Astrocyte of the cerebellum (primary cell): ENCODE measurements at regions of chr7 and their contacts with region 1.

Region 1: GRCh38 chr7:99210264-99210970 is 2.5 kb upstream of the KPNA7 start:
- DNase-seq: no peak
- H3K4me3 ChIP-seq: no peak overlapping the region
- CTCF ChIP-seq: no peak

Region 2: DNA sequence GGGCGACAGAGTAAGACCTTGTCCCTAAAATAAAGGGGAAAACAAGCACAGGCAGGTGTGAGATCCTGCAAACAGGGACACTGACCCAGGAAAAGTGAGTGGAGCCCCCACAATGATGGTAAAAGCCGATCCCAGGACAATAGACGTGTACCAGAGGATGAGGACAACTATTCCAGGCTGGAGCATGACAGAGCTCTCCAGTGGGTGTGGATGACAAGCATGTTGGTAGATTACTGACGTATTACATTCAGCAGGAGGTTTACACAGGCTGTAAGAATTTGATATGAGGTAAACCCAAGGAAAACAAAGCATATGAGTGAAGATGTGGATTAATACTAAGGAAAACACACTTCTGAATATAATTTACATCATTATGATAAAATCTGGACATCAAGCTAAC is 38.7 kb before region 1 on chr7:
- in situ Hi-C with region 1: loop called (anchors 5 kb)
- DNase-seq: no peak
- H3K4me3 ChIP-seq: no peak overlapping the region
- CTCF ChIP-seq: no peak

Region 3: DNA sequence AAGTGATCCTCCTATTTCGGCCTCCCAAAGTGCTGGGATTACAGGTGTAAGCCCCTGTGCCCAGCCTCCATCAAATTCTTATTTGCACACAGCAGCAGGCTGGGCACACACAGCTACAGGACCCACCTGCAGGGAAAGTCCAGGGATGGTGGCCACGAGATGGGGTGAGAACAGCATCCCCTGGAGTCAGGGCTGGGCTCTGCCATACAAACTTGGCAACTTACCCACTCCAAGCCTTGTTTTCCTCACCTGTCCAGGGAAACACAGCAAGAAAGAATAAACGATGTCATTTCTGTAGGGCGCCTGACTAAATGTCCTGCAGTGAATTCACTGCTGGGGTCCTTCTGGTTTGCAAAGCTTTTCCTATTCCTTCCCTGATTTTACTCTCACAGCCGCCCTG is 67.8 kb after region 1 on chr7:
- in situ Hi-C with region 1: no loop called
- DNase-seq: no peak
- H3K4me3 ChIP-seq: no peak overlapping the region
- CTCF ChIP-seq: no peak